ENCODE measurements at regions of chr17 and their contacts with region 1.

Region 1: DNA sequence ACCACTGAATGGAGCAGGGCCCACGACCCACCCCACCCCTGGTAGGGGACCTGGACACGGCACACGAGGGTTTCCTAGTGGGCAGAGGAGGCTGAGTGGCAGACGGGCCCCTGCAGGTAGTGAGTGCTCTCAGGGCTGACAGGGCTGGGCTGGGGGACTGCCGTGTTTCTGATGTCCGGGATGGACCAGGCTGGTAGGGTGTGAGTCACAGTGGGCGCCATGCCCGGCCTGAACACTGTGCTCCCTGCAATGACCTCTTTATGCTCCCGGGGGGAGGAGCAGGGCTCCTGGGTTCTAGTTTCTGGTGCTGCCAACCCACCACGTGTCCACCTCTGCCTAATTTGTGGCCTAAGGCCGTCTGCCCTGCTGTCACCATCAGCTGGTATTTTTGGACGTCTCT is 26.3 kb downstream of the ARHGAP23 start:
- DNase-seq: peak; percentile 80
- H3K4me3 ChIP-seq: peak overlapping the region; percentile 48 to 57 (median 53)
- H3K27ac ChIP-seq: peak overlapping the region; percentile 45
- H3K4me1 ChIP-seq: peaks cover 53% of the 10 kb centered on the region
- H3K27me3 ChIP-seq: no peaks in the 10 kb centered on the region
- CTCF ChIP-seq: no peak
- POLR2A ChIP-seq: peak; percentile 79

Region 2: GRCh38 chr17:38341035-38341721 is 113.3 kb before region 1 on chr17:
- CTCF ChIA-PET with region 1: no interaction called
- POLR2A ChIA-PET with region 1: no interaction called
- dilution Hi-C with region 1: no loop called
- intact Hi-C with region 1: no loop called
- DNase-seq: peak; percentile 51
- H3K4me3 ChIP-seq: no peak overlapping the region
- H3K27ac ChIP-seq: no peak overlapping the region
- H3K4me1 ChIP-seq: no peaks in the 10 kb centered on the region
- H3K27me3 ChIP-seq: peaks cover 0 to 3% of the 10 kb centered on the region in 2 experiments
- CTCF ChIP-seq: no peak
- POLR2A ChIP-seq: no peak

Region 3: DNA sequence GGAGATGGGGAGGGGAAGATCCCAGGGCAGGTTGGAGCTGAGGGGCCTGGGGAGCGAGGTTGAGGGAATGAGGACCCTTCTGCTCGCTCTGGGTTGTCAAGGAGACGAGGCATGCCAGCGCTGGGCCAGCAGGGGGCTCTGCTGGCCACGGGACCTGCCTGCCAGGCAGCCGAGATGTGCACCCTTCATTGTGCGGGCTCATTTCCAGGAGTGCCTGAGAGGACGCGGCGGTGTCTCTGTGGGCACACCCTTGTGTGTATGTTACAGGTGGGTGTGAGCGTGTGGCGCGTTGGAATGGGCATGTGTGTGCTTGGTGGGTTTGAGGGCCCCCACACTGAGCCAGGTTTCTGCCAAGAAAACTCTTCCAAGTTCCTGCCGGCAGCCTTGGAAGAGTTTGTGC is 10.4 kb before region 1 on chr17:
- CTCF ChIA-PET with region 1: interaction called, 14 read pairs
- POLR2A ChIA-PET with region 1: no interaction called
- dilution Hi-C with region 1: no loop called
- intact Hi-C with region 1: loop called (anchors 1 kb)
- DNase-seq: peak; percentile 68
- H3K4me3 ChIP-seq: no peak overlapping the region
- H3K27ac ChIP-seq: no peak overlapping the region
- H3K4me1 ChIP-seq: peaks cover 28% of the 10 kb centered on the region
- H3K27me3 ChIP-seq: no peaks in the 10 kb centered on the region
- CTCF ChIP-seq: peak; percentile 97 to 99
- POLR2A ChIP-seq: no peak

Region 4: GRCh38 chr17:38464723-38465390 is 10.3 kb after region 1 on chr17:
- CTCF ChIA-PET with region 1: interaction called, 20 read pairs
- POLR2A ChIA-PET with region 1: interaction called, 11 read pairs
- dilution Hi-C with region 1: no loop called
- intact Hi-C with region 1: loop called (anchors 1 kb)
- DNase-seq: peak; percentile 81
- H3K4me3 ChIP-seq: peak overlapping the region in 1 of 3 experiments; percentile 23
- H3K27ac ChIP-seq: peak overlapping the region; percentile 65
- H3K4me1 ChIP-seq: peaks cover 22% of the 10 kb centered on the region
- H3K27me3 ChIP-seq: no peaks in the 10 kb centered on the region
- CTCF ChIP-seq: no peak
- POLR2A ChIP-seq: peak; percentile 64

Region 5: GRCh38 chr17:38469875-38470274 is 15.4 kb after region 1 on chr17:
- CTCF ChIA-PET with region 1: interaction called, 21 read pairs
- POLR2A ChIA-PET with region 1: interaction called, 11 read pairs
- dilution Hi-C with region 1: no loop called
- intact Hi-C with region 1: loop called (anchors 1 kb)
- DNase-seq: peak; percentile 23
- H3K4me3 ChIP-seq: no peak overlapping the region
- H3K27ac ChIP-seq: peak overlapping the region; percentile 10
- H3K4me1 ChIP-seq: peaks cover 36% of the 10 kb centered on the region
- H3K27me3 ChIP-seq: no peaks in the 10 kb centered on the region
- CTCF ChIP-seq: no peak
- POLR2A ChIP-seq: peak; percentile 19

Measured in endothelial cell of umbilical vein (primary cell).